PC-3 (cell line): ENCODE measurements at regions of chr19 and their contacts with region 1.

Region 1: DNA sequence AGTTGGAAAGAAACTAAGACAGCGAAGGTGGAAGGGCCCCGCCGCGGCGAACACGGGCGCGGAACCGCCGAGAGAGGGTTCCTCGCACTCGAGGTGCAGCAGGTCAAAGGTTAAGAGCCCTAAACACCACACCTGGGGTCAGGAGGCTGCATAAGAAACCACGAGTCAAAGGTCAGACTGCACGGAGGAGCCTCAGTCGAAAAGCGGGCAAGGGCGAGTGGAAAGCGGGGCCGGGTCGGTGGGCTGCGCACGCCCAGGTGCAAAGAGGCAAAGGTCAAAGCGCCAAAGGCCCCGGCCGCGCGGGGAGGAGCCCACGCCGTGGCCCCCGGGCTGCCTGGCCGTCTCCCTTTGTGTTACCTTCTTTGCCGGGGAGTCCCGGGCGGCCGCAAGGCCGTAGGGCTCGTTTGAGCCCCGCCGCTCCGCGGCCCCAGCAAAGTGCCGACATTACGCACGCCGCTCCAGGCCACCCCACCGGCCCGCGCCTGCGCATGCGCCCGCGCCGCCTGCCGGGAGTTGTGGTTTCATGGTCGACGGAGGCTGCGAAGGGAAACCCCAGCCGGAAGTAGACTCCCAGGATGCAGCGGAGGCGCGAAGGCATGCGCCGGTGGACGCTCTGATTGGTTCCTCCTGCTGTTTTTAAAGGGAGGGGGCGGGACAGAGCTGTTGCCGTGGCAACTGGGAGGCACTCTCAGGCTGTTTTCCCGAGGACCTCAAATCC is at the start of gene POLRMT:
- DNase-seq: peak; percentile 96
- ATAC-seq: peak; percentile 96
- H3K4me3 ChIP-seq: peak within 1 kb of the TSS; percentile 89
- H3K27ac ChIP-seq: peak within 1 kb of the TSS; percentile 35
- H3K4me1 ChIP-seq: peaks cover 5% of the 10 kb centered on the region; the same call in 1 of the 2 replicates
- H3K27me3 ChIP-seq: no peaks in the 10 kb centered on the region
- CTCF ChIP-seq: no peak
- total RNA-seq, gene POLRMT: 60.5 and 80.6 TPM in 2 replicates

Region 2: GRCh38 chr19:572140-572742 is 61.0 kb before region 1 on chr19 and contains the start of gene BSG:
- CTCF ChIA-PET with region 1: no interaction called
- POLR2A ChIA-PET with region 1: no interaction called
- intact Hi-C with region 1: loop called (anchors 10 kb)
- DNase-seq: peak; percentile 95
- ATAC-seq: peak; percentile 45
- H3K4me3 ChIP-seq: peak within 1 kb of the TSS; percentile 93
- H3K27ac ChIP-seq: peak within 1 kb of the TSS; percentile 44
- H3K4me1 ChIP-seq: peaks cover 20% of the 10 kb centered on the region
- H3K27me3 ChIP-seq: no peaks in the 10 kb centered on the region
- CTCF ChIP-seq: no peak
- total RNA-seq, gene BSG: 458 and 514 TPM in 2 replicates

Region 3: DNA sequence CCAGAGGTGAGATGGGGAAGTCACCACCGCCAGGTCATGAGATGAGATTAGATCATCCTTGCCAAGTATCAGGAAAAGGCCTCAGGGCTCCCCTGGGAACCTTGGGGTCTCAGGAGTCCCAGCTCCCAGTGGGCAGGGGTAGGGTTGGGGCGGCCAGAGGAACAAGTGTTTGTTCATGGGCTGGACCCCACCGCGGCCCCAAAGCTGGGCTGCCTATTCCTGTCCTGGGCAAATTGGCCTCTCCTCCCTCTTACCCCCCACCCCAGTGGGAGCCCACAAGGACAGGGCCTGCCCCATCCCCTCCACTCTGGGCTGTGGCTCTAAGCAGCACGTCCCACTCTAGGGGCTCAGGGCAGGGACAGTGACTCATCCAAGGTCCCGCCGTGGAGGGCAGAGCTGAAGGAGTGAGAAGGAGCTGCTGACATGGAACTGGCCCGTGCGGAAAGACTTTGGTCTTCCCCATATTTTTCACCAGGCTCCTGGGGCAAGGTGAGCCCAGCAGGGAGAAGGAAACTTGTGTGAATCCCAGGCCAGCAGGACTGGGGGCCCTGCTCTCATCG is 47.6 kb before region 1 on chr19:
- CTCF ChIA-PET with region 1: no interaction called
- POLR2A ChIA-PET with region 1: no interaction called
- intact Hi-C with region 1: no loop called
- DNase-seq: no peak
- ATAC-seq: no peak
- H3K4me3 ChIP-seq: no peak overlapping the region
- H3K27ac ChIP-seq: no peak overlapping the region
- H3K4me1 ChIP-seq: peaks cover 10% of the 10 kb centered on the region
- H3K27me3 ChIP-seq: peaks cover 7% of the 10 kb centered on the region; the same call in 1 of the 2 replicates
- CTCF ChIP-seq: no peak

Region 4: GRCh38 chr19:835210-835810 is 202.1 kb after region 1 on chr19:
- CTCF ChIA-PET with region 1: no interaction called
- POLR2A ChIA-PET with region 1: no interaction called
- intact Hi-C with region 1: no loop called
- DNase-seq: no peak
- ATAC-seq: no peak
- H3K4me3 ChIP-seq: no peak overlapping the region
- H3K27ac ChIP-seq: no peak overlapping the region
- H3K4me1 ChIP-seq: no peaks in the 10 kb centered on the region
- H3K27me3 ChIP-seq: no peaks in the 10 kb centered on the region
- CTCF ChIP-seq: no peak